WTC11 (cell line): ENCODE measurements at regions of chr11 and their contacts with region 1.

Region 1: DNA sequence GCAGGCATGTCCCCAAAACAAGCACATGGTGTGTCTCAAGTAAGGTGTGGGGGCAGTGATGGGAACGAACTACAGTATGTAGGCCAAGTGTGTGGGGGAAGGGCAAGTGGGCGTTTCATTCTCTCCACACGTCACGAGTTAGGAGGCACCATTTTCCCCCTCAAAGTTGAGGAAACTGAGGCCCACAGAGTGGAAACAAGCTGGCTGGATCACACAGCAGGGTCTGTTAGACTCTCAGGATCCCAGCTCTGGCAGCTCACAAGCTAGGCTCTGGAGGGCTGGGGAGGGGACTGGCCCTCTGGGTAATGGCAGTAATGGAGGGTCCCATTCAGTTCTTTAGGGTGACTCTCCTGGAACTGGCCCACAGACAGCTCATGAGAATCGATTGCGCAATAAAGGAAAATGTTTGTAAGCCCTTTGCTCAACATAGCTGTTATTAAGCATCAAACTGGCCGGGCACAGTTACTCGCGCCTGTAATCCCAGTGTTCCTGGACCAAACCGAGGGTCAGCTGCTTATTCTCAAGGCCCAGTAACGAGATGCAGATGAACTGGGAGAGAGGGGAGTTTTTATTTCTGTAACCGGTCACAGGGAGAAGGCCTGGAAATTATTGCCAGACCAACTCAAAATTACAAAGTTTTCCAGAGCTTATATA is 24.1 kb upstream of the TUB start:
- DNase-seq: no peak
- ATAC-seq: no peak
- H3K4me3 Mint-ChIP-seq: no peak overlapping the region
- H3K27ac Mint-ChIP-seq: peak overlapping the region; percentile 37; the same call in 1 of the 2 replicates
- H3K4me1 Mint-ChIP-seq: peaks cover 14% of the 10 kb centered on the region
- H3K27me3 Mint-ChIP-seq: no peaks in the 10 kb centered on the region
- CTCF ChIP-seq: no peak

Region 2: DNA sequence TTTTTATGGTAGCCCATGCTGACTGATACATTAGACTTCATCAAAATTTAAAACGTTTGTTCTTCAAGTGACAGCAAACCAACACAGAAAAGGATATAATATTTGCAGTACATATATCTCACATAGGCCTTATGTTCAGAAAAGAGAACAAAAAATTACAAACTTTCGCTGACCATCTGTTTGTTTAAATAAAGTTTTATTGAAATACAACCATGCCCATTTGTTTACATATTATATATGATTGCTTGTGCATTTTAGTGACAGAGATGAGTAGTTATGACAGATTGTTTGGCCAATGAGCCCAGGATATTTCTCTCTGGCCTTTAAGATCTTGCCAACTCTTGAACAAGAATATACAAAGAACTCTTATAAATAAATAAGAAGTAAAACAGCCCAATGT is 252.7 kb before region 1 on chr11:
- CTCF ChIA-PET with region 1: no interaction called
- POLR2A ChIA-PET with region 1: no interaction called
- DNase-seq: no peak
- ATAC-seq: no peak
- H3K4me3 Mint-ChIP-seq: no peak overlapping the region
- H3K27ac Mint-ChIP-seq: no peak overlapping the region
- H3K4me1 Mint-ChIP-seq: no peaks in the 10 kb centered on the region
- H3K27me3 Mint-ChIP-seq: peaks cover 12% of the 10 kb centered on the region
- CTCF ChIP-seq: no peak

Region 3: DNA sequence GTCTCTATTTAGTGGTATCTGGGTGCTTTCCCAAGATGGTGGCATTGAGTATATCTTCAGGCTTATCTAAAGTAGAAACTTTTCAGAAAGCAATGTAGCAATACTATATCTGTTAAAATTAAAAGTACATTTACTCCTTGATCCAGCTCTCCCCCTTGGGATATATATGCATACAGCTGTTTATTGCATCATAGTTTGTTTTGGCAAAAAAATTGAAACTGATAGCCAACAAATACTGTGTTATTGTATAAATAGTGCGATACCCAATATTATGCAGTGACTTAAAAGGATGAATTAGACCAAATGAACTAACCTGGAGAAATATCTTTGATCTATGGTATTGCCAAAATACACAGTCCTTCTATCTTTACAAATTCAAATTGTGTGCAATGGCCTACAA is 107.0 kb before region 1 on chr11:
- CTCF ChIA-PET with region 1: no interaction called
- POLR2A ChIA-PET with region 1: no interaction called
- DNase-seq: no peak
- ATAC-seq: no peak
- H3K4me3 Mint-ChIP-seq: no peak overlapping the region
- H3K27ac Mint-ChIP-seq: no peak overlapping the region
- H3K4me1 Mint-ChIP-seq: no peaks in the 10 kb centered on the region
- H3K27me3 Mint-ChIP-seq: peaks cover 16% of the 10 kb centered on the region
- CTCF ChIP-seq: no peak

Region 4: DNA sequence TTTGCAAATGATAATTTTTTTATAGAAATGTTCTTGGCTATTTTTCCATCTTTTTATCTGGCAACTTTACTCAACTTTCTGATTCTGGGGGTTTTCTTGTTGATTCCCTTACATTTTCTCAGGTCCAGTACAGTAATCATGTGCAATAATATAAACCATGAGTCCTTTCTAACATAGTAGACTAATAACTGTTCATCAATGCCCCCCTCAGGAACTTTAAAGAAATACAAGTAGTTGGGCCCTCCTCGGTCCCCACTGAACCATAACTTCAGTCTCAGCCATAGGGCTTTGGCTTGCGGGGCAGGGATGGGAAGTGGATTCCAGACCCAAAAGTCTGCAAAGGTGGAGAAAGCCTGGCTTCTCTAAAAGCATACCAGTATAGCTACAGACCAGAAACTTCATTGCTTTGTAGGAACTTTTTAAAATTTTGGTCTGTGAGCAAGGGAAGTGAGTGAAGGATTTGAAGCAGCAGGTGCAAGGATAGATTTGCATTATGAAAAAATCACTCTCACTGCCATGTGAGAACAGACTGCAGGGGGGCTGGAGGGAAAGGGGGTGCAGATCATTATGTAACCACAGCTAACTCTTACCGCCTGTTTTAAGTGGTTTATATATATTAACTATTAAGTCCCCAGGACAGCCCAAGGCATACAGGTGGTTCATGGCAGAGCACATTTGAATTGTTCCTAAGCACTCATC is 13.6 kb after region 1 on chr11:
- CTCF ChIA-PET with region 1: interaction called, 36 read pairs
- POLR2A ChIA-PET with region 1: no interaction called
- DNase-seq: no peak
- ATAC-seq: peak; percentile 40
- H3K4me3 Mint-ChIP-seq: no peak overlapping the region
- H3K27ac Mint-ChIP-seq: no peak overlapping the region
- H3K4me1 Mint-ChIP-seq: peaks cover 48% of the 10 kb centered on the region
- H3K27me3 Mint-ChIP-seq: peaks cover 12% of the 10 kb centered on the region; the same call in 1 of the 2 replicates
- CTCF ChIP-seq: no peak

Region 5: DNA sequence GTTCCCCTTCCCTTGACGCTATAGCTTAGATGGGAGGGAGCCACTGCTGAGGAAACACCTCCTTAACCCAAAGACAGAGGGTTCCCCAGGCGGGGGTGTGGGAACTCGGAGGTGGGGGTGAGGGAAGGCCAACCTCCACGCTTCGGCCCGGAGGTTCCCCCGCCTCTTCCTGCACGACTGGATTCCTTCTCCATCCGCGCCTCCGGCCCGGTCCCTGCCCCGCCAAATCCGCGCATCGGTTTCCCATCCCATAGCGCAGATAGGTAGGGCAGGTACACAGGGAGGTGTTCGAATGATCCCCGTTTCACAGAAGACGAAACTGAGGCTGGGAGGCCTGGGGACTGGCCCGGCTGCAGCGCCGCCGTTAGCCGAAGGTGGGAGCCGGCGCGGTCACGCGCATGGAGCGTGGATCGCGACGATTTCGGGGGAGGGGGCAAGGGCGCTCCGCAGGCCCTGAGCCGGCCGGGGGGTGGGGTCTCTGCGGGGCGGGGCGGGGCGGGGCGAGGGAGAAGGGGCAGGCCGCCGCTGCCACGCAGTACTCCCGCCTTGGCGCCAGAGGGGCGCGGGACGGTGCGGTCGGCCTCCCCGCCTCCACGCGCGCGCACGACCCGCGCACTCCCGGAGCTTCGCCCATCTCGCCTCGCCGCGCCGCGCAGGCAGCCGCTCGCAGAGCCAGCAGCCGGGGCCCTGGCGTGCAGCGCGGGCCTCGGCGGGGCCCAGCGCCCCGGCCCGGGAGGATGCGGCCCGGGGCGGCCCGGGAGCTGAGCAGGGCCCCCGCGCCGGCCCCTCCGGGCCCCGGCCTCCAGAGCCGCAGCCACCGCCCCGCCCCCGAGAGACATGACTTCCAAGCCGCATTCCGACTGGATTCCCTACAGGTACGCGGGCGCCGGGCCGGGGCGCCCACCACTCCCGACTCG is 24.0 kb after region 1 on chr11 and contains the start of gene TUB:
- CTCF ChIA-PET with region 1: interaction called, 141 read pairs
- POLR2A ChIA-PET with region 1: interaction called, 3 read pairs
- DNase-seq: peak; percentile 70
- ATAC-seq: peak; percentile 44
- H3K4me3 Mint-ChIP-seq: peak within 1 kb of the TSS; percentile 79
- H3K27ac Mint-ChIP-seq: no peak within 1 kb of the TSS
- H3K4me1 Mint-ChIP-seq: peaks cover 48% of the 10 kb centered on the region
- H3K27me3 Mint-ChIP-seq: peaks cover 42% of the 10 kb centered on the region
- CTCF ChIP-seq: no peak
- total RNA-seq, gene TUB: 29.2 to 32.1 TPM (median 30.0 TPM) in 3 replicates

Region 6: GRCh38 chr11:8192016-8192895 is 135.3 kb after region 1 on chr11:
- CTCF ChIA-PET with region 1: no interaction called
- POLR2A ChIA-PET with region 1: no interaction called
- DNase-seq: peak; percentile 84
- ATAC-seq: peak; percentile 93
- H3K4me3 Mint-ChIP-seq: no peak overlapping the region
- H3K27ac Mint-ChIP-seq: no peak overlapping the region
- H3K4me1 Mint-ChIP-seq: no peaks in the 10 kb centered on the region
- H3K27me3 Mint-ChIP-seq: peaks cover 26% of the 10 kb centered on the region
- CTCF ChIP-seq: peak; percentile 70